HEK293 (cell line): ENCODE measurements at regions of chr7 and their contacts with region 1.

Region 1: DNA sequence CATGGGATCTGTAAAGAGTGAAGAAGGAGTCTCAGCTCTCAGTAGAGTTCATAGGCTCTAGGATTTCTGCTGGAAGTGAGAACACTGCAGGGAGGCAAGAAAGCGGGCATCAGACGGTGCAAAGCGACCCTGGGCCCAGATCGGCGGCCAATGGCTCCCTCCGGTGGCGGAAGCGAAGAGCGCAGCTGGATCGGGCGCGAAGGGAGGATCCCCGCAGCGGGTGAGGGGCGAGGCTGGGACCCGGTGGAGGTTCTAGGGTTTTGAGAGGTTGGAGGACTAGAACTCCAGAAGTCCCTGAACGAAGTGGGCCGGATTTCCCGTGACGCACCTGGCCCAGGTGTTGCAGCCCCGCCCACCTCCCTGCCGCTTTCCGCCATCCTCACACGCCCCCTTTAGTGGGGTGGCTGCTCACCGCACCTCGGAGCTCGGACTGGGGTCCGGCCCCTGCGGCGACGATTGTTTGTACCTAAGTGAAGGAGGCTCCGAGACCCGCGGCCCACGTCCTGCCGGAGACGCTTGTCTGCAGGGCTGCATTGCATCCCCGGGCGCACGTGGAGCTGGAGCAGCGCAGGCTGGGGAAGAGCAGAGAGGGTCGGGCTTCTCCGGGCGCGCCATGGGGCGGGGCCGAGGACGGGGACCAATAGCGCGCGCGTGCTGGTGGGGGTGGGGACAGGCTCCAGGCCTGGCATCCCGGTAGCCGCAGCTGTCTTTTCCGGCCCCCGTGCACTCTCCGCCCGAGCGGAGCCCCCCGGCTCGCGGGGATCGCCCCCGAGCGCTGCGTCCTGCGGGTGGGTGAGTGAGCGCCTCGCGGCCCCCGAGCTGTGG is at the start of gene SLC12A9:
- H3K4me3 ChIP-seq: peak within 1 kb of the TSS; percentile 59
- H3K27ac ChIP-seq: peak within 1 kb of the TSS; percentile 54; the same call in 1 of the 2 replicates
- H3K4me1 ChIP-seq: peaks cover 3% of the 10 kb centered on the region; the same call in 1 of the 2 replicates
- CTCF ChIP-seq: peak; percentile 95

Region 2: GRCh38 chr7:100520138-100520537 is 332.1 kb before region 1 on chr7:
- CTCF ChIA-PET with region 1: no interaction called
- POLR2A ChIA-PET with region 1: no interaction called
- H3K4me3 ChIP-seq: no peak overlapping the region
- H3K27ac ChIP-seq: no peak overlapping the region
- H3K4me1 ChIP-seq: no peaks in the 10 kb centered on the region
- CTCF ChIP-seq: no peak

Region 3: DNA sequence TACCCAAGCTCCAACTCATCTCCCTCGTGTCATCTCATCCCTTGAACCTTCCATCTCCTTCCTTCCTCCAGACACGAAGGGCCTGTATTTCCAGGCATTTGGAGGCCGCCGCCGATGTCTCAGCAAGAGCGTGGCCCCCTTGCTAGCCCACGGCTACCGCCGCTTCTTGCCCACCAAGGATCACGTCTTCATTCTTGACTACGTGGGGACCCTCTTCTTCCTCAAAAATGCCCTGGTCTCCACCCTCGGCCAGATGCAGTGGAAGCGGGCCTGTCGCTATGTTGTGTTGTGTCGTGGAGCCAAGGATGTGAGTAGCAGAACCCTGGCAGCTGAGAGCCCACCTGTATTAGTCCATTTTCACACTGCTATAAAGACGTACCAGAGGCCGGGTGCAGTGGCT is 260.7 kb before region 1 on chr7:
- CTCF ChIA-PET with region 1: no interaction called
- POLR2A ChIA-PET with region 1: no interaction called
- H3K4me3 ChIP-seq: no peak overlapping the region
- H3K27ac ChIP-seq: no peak overlapping the region
- H3K4me1 ChIP-seq: no peaks in the 10 kb centered on the region
- CTCF ChIP-seq: no peak

Region 4: DNA sequence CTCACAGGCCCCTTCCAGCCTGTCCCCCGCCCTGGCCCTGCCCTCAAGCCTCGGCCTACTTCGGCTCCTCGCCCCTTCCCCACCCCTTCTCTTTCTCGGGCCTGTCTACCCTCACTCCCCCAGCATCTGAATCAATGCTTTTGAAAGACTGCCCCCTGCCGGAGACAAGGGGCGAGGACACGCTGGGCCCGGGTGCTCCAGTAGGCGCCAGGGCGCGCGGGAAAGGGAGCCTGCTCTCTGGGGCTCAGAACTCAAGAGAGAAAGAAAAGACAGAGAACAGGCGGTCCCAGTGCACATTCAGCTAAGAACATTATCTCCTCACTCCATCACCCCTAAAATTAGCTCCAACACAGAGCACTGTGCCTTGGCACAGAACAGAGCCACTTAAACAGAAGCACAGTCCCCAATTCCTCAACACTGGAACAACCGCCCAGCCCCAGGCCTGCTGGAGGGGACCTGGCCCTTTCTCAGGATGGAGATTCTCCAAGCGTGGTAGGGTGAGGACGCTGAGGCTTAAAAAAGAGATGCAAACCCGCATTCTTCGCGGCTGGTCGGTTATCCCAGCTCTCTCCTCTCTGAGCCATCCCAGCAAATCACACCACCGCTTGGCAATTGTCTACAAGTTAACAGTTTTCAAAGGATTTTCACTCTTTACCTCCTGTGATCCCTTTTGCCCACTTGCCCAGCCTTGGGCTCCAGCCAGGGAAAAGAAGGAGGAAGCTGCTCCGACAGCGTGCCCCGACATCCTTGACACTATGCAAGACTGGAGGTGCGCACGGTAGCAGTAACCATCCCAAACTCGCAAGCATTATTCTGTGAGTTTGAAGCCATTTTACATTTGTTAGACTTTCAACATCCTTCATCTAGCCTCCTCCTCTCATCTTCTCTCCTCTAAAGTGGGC is 160.3 kb before region 1 on chr7:
- CTCF ChIA-PET with region 1: interaction called, 13 read pairs
- POLR2A ChIA-PET with region 1: interaction called, 4 read pairs
- H3K4me3 ChIP-seq: peak overlapping the region; percentile 6; the same call in 1 of the 2 replicates
- H3K27ac ChIP-seq: peak overlapping the region; percentile 25; the same call in 1 of the 2 replicates
- H3K4me1 ChIP-seq: peaks cover 2% of the 10 kb centered on the region; the same call in 1 of the 2 replicates
- CTCF ChIP-seq: peak; percentile 93

Region 5: DNA sequence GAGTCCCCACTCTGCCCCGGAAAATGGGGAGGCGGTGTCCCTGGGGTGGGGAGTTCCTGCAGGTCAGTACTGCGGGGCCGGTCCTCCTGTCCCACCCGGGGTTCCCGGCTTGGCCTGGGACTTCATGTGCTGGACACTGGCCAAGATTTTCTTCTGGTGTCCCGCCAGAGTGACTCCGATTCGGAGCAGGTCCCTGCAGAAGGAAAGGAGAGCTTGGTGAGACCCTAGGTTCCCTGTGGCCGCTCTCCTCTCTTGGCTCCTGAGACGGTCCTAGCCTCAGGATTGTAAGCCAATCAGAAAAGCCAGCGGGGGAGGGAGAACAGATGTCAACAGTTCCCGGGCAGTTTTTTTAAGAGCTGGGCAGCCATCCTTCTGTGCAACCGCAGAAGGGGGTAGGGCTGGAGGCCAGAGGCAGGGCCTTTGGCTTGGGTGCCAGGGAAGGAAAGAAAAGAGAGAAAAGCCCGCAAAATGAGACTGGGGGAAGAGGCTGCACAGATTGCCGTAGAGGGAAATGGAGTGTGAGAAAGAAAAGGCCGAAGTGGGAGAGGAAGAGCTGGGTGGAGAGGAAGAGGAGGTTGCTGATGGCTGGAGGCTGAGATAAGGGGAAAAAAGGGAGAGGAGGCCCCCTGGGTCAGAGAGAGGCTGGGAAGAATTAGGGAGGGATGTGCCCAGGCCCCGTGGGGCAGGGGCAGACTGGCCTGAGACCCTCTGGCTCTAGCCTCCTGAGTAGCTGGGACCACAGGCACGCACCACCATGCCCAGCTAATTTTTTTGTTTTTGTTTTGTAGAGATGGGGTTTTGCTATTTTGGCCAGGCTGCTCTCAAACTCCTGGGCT is 48.6 kb before region 1 on chr7:
- CTCF ChIA-PET with region 1: interaction called, 95 read pairs
- POLR2A ChIA-PET with region 1: interaction called, 15 read pairs
- H3K4me3 ChIP-seq: no peak overlapping the region
- H3K27ac ChIP-seq: 0 out of 2 replicates have a peak overlapping the region, but pooled peaks have one; percentile 41
- H3K4me1 ChIP-seq: peaks cover 9% of the 10 kb centered on the region
- CTCF ChIP-seq: no peak

Region 6: DNA sequence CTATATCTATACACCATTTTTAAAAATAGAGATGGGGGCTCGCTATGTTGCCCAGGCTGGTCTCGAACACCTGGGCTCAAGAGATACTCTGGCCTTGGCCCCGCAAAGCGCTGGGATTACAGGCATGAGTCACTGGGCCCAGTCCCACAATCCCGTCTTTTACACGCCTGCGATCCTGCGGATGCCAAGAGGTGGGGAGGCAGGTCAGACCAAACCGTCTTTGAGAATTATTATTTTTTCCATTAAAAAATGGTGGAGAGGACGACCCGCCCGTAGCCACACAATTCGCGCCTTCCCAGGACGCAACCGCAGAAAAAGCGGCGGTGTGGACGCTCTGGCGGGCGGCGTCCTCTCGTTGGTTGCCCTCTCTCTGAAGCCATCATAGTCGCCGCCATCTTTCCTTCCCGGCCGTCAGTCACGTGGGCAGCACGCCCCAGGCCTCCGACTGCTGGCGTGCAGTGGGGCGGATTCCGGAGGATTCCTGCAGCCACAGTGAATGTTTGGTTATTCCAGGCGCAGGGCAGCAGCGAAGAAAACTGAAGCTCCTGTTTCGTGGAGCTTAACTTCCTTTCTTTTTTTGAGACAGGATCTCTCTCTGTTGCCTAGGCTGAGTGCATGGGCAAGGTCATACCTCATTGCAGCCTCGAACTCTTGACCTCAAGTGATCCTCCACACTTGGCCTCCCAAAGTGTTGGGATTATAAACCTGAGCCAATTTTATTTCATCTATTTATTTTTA is 15.0 kb before region 1 on chr7:
- CTCF ChIA-PET with region 1: interaction called, 20 read pairs
- POLR2A ChIA-PET with region 1: no interaction called
- H3K4me3 ChIP-seq: peak overlapping the region; percentile 28
- H3K27ac ChIP-seq: peak overlapping the region; percentile 91
- H3K4me1 ChIP-seq: peaks cover 9% of the 10 kb centered on the region
- CTCF ChIP-seq: no peak

Region 7: GRCh38 chr7:100874577-100875355 is 22.5 kb after region 1 on chr7 and contains the start of gene SRRT:
- CTCF ChIA-PET with region 1: interaction called, 4 read pairs
- POLR2A ChIA-PET with region 1: interaction called, 11 read pairs
- H3K4me3 ChIP-seq: peak within 1 kb of the TSS; percentile 68
- H3K27ac ChIP-seq: peak within 1 kb of the TSS; percentile 78
- H3K4me1 ChIP-seq: no peaks in the 10 kb centered on the region
- CTCF ChIP-seq: peak; percentile 78